ENCODE measurements at regions of chr17 and their contacts with region 1.

Region 1: GRCh38 chr17:74736513-74737298 is at the start of gene RAB37:
- DNase-seq: peak; percentile 70
- ATAC-seq: peak; percentile 58
- H3K4me3 Mint-ChIP-seq: peak within 1 kb of the TSS; percentile 81
- H3K27ac Mint-ChIP-seq: peak within 1 kb of the TSS; percentile 22; the same call in 1 of the 2 replicates
- H3K4me1 Mint-ChIP-seq: peaks cover 27% of the 10 kb centered on the region
- H3K27me3 Mint-ChIP-seq: peaks cover 18% of the 10 kb centered on the region
- CTCF ChIP-seq: no peak
- total RNA-seq, gene RAB37: 8.8 to 9.4 TPM (median 8.9 TPM) in 3 replicates

Region 2: DNA sequence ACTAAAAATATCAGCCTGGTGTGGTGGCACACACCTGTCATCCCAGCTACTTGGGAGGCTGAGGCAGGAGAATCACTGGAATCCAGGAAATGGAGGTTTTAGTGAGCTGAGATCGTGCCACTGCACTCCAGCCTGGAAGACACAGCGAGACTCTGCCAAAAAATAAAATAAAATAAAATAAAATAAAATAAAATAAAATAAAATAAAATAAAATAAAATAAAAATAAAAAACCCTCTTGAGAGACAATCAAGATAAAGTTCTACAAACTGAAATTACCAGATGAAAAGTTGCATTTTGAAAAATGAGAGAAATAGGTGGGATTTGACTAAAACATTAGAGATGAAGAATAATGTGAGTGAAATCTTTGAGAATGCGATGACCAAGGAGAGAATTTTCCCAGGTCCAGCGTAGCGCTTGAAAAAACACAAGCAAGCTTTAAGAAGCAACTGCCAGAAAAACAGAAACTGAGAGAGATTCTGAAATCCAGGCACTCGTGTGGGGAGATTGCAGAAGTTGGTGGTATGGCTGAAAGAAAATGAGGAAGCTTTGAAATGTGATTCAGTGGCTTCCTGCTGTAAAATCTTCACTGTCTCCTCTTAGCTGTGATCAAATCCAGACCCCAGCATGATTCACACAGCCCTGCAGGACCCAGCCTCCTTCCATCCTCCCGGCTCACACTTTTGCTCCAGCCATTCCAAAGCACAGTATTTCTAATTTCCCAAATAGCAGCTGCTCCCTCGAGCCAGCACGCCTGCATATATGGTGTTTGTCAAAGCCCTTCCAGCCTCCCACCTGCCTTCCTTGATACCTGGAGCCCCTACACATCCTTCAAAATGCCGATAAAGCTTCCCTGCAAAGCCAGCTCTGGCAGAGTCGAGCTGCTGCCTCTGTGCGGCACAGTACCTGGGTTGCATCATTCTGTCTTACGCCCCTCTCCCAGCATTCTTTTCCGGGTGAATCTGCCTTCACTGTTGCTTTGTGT is 104.9 kb before region 1 on chr17:
- CTCF ChIA-PET with region 1: interaction called, 17 read pairs
- POLR2A ChIA-PET with region 1: no interaction called
- DNase-seq: no peak
- ATAC-seq: peak; percentile 36; the same call in 1 of the 2 replicates
- H3K4me3 Mint-ChIP-seq: no peak overlapping the region
- H3K27ac Mint-ChIP-seq: peak overlapping the region; percentile 61; the same call in 1 of the 2 replicates
- H3K4me1 Mint-ChIP-seq: peaks cover 50% of the 10 kb centered on the region
- H3K27me3 Mint-ChIP-seq: peaks cover 15% of the 10 kb centered on the region
- CTCF ChIP-seq: no peak

Region 3: GRCh38 chr17:74677558-74678466 is 58.9 kb before region 1 on chr17:
- CTCF ChIA-PET with region 1: interaction called, 43 read pairs
- POLR2A ChIA-PET with region 1: no interaction called
- DNase-seq: no peak
- ATAC-seq: peak; percentile 84
- H3K4me3 Mint-ChIP-seq: no peak overlapping the region
- H3K27ac Mint-ChIP-seq: no peak overlapping the region; the same call in 1 of the 2 replicates
- H3K4me1 Mint-ChIP-seq: peaks cover 17% of the 10 kb centered on the region
- H3K27me3 Mint-ChIP-seq: peaks cover 30% of the 10 kb centered on the region
- CTCF ChIP-seq: no peak

Region 4: GRCh38 chr17:74759243-74759801 is 22.6 kb after region 1 on chr17:
- CTCF ChIA-PET with region 1: interaction called, 19 read pairs
- POLR2A ChIA-PET with region 1: interaction called, 3 read pairs
- DNase-seq: no peak
- ATAC-seq: no peak
- H3K4me3 Mint-ChIP-seq: no peak overlapping the region
- H3K27ac Mint-ChIP-seq: peak overlapping the region; percentile 89
- H3K4me1 Mint-ChIP-seq: peaks cover 52% of the 10 kb centered on the region
- H3K27me3 Mint-ChIP-seq: no peaks in the 10 kb centered on the region
- CTCF ChIP-seq: no peak

Region 5: GRCh38 chr17:74776044-74776977 is 39.6 kb after region 1 on chr17 and contains the start of gene NAT9:
- CTCF ChIA-PET with region 1: interaction called, 55 read pairs
- POLR2A ChIA-PET with region 1: interaction called, 4 read pairs
- DNase-seq: peak; percentile 99
- ATAC-seq: peak; percentile 96
- H3K4me3 Mint-ChIP-seq: peak within 1 kb of the TSS; percentile 91
- H3K27ac Mint-ChIP-seq: peak within 1 kb of the TSS; percentile 97
- H3K4me1 Mint-ChIP-seq: peaks cover 15% of the 10 kb centered on the region
- H3K27me3 Mint-ChIP-seq: no peaks in the 10 kb centered on the region
- CTCF ChIP-seq: no peak
- total RNA-seq, gene NAT9: 66.0 to 71.2 TPM (median 67.1 TPM) in 3 replicates

Region 6: DNA sequence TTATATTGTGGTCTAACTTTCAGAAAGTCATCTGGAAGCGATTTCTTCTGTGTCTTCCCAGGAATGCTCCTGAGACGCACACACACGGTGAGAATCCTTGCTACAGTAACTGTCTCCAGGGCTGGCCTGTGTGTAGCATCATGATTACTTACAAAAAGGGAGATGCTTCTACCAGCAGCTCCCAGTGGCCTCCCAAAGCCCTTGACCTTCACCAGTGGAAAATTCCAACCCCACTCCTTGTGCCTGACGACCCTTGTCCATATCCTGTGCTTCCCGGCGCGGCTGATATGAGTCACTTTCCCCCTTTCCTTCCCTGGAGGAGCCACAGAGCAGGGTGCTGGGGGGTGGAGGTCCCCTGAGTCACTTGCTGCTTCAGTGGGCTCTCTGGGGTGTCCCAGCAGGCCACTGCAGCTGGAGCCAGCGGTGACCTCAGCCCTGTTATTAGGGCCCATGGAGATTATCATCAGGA is 61.6 kb after region 1 on chr17:
- CTCF ChIA-PET with region 1: no interaction called
- POLR2A ChIA-PET with region 1: no interaction called
- DNase-seq: no peak
- ATAC-seq: no peak
- H3K4me3 Mint-ChIP-seq: no peak overlapping the region
- H3K27ac Mint-ChIP-seq: no peak overlapping the region
- H3K4me1 Mint-ChIP-seq: no peaks in the 10 kb centered on the region
- H3K27me3 Mint-ChIP-seq: no peaks in the 10 kb centered on the region
- CTCF ChIP-seq: no peak

Region 7: DNA sequence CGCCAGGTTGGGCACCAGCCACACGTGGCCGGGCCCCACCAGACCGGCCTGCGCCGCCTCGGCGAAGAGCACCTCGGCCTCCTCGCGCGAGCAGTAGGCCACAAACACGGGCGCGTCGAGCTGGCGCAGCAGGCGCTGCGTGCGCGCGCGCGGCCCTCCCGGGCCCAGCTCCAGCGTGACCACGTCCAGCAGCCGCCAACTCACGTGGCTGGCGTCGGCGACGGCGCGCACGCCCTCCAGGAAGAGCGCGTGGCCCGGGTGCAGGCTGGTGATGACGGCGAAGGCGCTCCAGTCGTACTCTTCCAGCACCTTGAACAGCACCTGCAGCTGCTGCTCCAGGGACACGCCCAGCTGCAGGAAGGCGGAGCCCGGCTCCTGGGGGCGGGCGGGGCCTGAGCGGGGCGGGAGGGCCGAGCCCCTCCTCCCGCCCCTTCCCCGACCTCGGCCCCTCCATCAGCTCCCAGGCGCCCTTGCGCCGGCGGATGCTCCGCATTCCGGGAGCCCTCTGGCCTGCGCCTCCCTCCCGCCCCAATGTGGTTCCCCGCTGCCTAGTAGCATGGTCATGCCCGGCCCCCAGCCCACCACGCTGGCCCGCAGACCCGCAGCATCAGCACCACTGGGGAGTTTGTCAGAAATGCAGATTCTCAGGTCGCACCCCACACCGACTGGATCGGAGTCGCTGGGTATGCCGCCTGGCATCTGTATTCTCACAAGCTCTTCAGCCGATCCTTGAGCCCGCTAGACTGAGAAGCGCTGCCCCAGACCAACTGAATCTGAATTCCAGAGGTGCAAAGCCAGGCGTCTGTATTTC is 115.7 kb after region 1 on chr17:
- CTCF ChIA-PET with region 1: interaction called, 23 read pairs
- POLR2A ChIA-PET with region 1: no interaction called
- DNase-seq: peak; percentile 89
- ATAC-seq: peak; percentile 90
- H3K4me3 Mint-ChIP-seq: peak overlapping the region; percentile 79
- H3K27ac Mint-ChIP-seq: no peak overlapping the region
- H3K4me1 Mint-ChIP-seq: peaks cover 9% of the 10 kb centered on the region
- H3K27me3 Mint-ChIP-seq: peaks cover 91% of the 10 kb centered on the region
- CTCF ChIP-seq: no peak